ENCODE measurements at regions of chr17 and their contacts with region 1.

Region 1: GRCh38 chr17:29579866-29580771 is 9.3 kb downstream of the GIT1 start:
- DNase-seq: peak; percentile 91 to 99
- ATAC-seq: peak; percentile 87 to 96
- H3K4me3 ChIP-seq: no peak overlapping the region
- H3K27ac ChIP-seq: peak overlapping the region; percentile 41 to 72; a peak in 5 of 6 replicates
- H3K4me1 ChIP-seq: peaks cover 26% of the 10 kb centered on the region
- CTCF ChIP-seq: peak; percentile 98
- EP300 ChIP-seq: no peak
- POLR2A ChIP-seq: no peak
- RAD21 ChIP-seq: peak; percentile 95

Region 2: DNA sequence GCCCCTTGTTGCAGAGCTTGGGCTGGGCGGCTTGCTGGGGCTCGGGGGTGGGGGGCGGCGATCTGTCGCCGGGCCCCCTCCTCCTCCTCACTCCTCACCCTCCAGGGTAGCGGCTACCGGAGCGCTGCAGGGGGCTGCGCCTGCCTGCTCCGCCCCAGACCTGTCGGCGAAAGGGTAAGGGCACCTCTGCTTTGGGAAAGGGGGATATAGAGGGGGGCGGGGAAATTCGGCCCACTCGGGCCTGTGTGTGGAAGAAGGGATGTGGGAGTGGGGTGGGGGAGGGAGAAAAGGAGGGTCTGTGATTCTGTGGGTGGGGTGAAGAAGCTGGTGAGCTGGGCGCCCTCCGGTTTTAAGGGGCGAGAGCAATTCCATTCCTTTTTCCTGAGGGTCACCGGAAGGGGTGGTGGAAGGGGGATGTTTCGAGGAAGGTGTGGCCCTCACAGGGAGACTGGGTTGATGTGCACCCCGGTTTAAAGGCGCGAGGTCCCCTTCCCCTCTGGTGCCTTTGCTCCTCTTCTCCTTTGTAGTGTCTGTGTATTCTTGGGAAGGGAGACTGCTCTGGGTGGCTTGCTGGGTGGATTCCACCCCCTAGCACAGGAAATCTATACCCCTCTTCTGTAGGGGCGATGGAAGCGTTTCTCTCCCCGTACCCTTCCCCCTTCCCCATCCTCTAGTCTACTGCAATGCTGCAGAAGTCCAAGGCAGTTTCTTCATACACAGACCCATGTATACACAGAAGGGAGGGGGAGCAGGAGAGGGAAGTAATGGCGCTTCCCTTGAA is 189.1 kb before region 1 on chr17:
- CTCF ChIA-PET with region 1: no interaction called
- POLR2A ChIA-PET with region 1: no interaction called
- DNase-seq: peak; percentile 28 to 38
- ATAC-seq: peak; percentile 49 to 63
- H3K4me3 ChIP-seq: peak overlapping the region; percentile 79
- H3K27ac ChIP-seq: peak overlapping the region; percentile 96 to 98
- H3K4me1 ChIP-seq: peaks cover 26% of the 10 kb centered on the region
- CTCF ChIP-seq: no peak
- EP300 ChIP-seq: no peak
- POLR2A ChIP-seq: peak; percentile 26; the same call in 1 of the 2 replicates
- RAD21 ChIP-seq: no peak

Region 3: GRCh38 chr17:29597361-29598172 is 17.4 kb after region 1 on chr17:
- CTCF ChIA-PET with region 1: interaction called, 474 read pairs
- POLR2A ChIA-PET with region 1: interaction called, 3 read pairs
- DNase-seq: no peak
- ATAC-seq: no peak
- H3K4me3 ChIP-seq: no peak overlapping the region
- H3K27ac ChIP-seq: no peak overlapping the region
- H3K4me1 ChIP-seq: peaks cover 19% of the 10 kb centered on the region
- CTCF ChIP-seq: no peak
- EP300 ChIP-seq: no peak
- POLR2A ChIP-seq: no peak
- RAD21 ChIP-seq: no peak

Measured in A549 (cell line).